H1 (cell line): ENCODE measurements at regions of chr4 and their contacts with region 1.

Region 1: GRCh38 chr4:25531272-25531671 is 124.4 kb upstream of the SLC34A2 start:
- DNase-seq: no peak
- H3K4me3 ChIP-seq: no peak overlapping the region
- H3K27ac ChIP-seq: no peak overlapping the region
- H3K4me1 ChIP-seq: no peaks in the 10 kb centered on the region
- H3K27me3 ChIP-seq: no peaks in the 10 kb centered on the region
- CTCF ChIP-seq: peak; percentile 8 to 44 (median 37); a peak in 3 of 4 replicates
- EP300 ChIP-seq: no peak
- POLR2A ChIP-seq: no peak
- RAD21 ChIP-seq: peak; percentile 38 to 54

Region 2: DNA sequence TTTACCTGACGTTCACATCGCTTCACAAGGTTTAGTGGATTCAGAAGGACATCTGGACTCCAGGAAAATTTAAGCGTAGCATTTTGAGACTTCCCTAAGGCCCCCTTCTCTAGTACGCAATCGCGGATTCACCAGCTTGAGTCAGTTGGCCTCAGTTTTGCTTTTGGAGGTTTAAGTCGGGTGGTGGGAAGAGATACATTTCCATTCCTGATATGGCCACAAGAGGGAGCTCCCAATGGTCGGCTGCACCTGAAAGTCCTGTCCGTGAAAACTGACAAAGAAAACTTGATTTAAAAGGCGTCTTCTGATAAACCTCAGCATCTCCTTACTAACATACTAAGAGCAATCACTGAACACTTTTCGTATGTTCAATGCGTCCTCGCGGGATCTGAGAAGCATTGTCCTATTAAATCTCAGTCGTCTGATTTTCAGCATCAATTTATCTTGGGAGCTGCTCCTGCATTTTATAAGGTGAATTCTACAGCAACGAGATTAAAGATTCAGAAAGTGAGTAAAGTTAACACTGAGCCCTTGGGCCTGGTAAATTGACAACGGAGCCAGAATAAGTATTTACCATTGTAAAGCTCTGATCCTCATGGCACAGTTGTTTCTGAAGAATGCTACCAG is 551.1 kb before region 1 on chr4:
- CTCF ChIA-PET with region 1: no interaction called
- POLR2A ChIA-PET with region 1: no interaction called
- DNase-seq: peak; percentile 41 to 67
- H3K4me3 ChIP-seq: no peak overlapping the region; a peak in 1 of 8 replicates
- H3K27ac ChIP-seq: no peak overlapping the region
- H3K4me1 ChIP-seq: peaks cover 0 to 5% (median 0%) of the 10 kb centered on the region in 4 experiments; a peak in 3 of 7 replicates
- H3K27me3 ChIP-seq: no peaks in the 10 kb centered on the region; a peak in 1 of 7 replicates
- CTCF ChIP-seq: peak; percentile 61 to 92 (median 77)
- EP300 ChIP-seq: no peak
- POLR2A ChIP-seq: no peak
- RAD21 ChIP-seq: peak; percentile 71 to 78

Region 3: DNA sequence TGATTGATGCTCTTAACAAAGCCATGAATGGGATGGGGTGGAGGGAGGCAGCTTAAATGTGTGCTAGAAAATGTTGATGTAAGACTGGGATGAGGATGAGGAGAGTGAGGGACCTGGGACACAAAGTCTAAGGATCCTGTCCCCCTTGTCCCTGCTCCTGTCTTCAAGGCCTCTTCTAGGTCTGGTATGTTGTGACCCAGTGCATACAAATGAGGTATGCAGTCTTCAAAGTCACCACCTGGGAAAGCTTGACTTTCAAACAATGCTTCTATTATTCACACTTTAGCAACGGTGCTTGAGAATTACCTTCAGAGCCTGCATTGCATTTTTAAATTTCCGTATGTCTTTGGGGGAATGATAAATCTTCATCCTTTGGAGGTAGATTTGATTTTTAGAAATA is 36.0 kb after region 1 on chr4:
- CTCF ChIA-PET with region 1: interaction called, 11 read pairs
- POLR2A ChIA-PET with region 1: no interaction called
- DNase-seq: no peak
- H3K4me3 ChIP-seq: no peak overlapping the region
- H3K27ac ChIP-seq: no peak overlapping the region
- H3K4me1 ChIP-seq: peaks cover 0 to 4% (median 3%) of the 10 kb centered on the region in 4 experiments; a peak in 4 of 7 replicates
- H3K27me3 ChIP-seq: no peaks in the 10 kb centered on the region
- CTCF ChIP-seq: no peak
- EP300 ChIP-seq: no peak
- POLR2A ChIP-seq: no peak
- RAD21 ChIP-seq: no peak

Region 4: DNA sequence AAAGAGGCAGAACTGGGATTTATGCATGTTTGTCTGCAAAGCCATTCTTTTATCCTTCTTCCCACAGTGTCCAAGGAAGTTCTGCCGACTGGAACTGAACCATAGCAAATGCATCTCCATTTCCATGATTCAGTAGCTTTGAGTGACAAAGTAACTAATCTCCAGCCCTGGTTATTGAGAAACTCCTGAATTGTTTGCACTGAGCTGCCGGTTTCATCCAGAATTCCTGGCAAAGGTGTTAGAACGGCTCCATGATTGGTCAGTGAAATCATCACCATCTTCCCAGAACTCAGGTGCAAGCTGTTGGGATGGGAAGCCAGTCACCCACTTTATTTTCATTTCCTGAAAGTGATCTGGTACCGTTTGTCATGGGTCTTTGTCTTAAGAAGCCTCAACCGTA is 77.4 kb after region 1 on chr4:
- CTCF ChIA-PET with region 1: interaction called, 10 read pairs
- POLR2A ChIA-PET with region 1: no interaction called
- DNase-seq: no peak
- H3K4me3 ChIP-seq: no peak overlapping the region
- H3K27ac ChIP-seq: no peak overlapping the region
- H3K4me1 ChIP-seq: no peaks in the 10 kb centered on the region
- H3K27me3 ChIP-seq: no peaks in the 10 kb centered on the region
- CTCF ChIP-seq: no peak
- EP300 ChIP-seq: no peak
- POLR2A ChIP-seq: no peak
- RAD21 ChIP-seq: no peak

Region 5: DNA sequence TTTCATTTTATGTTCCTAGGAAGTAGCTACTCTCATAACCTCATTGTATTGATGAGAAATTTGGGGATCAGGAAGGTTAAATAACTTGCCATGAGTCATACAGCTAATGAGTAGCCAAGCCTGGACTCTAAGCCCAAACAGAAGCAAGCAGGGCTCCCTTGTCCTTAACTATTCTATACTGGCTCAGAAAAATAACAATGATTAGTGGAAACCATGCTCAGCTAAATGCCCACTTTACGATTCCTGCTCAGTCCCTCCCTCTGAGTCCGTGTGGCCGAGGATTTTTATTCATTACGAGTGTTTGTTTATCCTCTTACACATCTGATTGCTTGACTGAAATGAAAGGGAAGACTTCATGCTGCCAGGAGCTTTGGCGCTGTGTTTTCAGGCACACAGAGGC is 225.2 kb after region 1 on chr4:
- CTCF ChIA-PET with region 1: interaction called, 14 read pairs
- POLR2A ChIA-PET with region 1: no interaction called
- DNase-seq: no peak
- H3K4me3 ChIP-seq: no peak overlapping the region
- H3K27ac ChIP-seq: no peak overlapping the region
- H3K4me1 ChIP-seq: no peaks in the 10 kb centered on the region
- H3K27me3 ChIP-seq: no peaks in the 10 kb centered on the region
- CTCF ChIP-seq: no peak
- EP300 ChIP-seq: no peak
- POLR2A ChIP-seq: no peak
- RAD21 ChIP-seq: no peak